Heart left ventricle (tissue), 16 donors: ENCODE measurements at regions of chr12 and their contacts with region 1.

Region 1: DNA sequence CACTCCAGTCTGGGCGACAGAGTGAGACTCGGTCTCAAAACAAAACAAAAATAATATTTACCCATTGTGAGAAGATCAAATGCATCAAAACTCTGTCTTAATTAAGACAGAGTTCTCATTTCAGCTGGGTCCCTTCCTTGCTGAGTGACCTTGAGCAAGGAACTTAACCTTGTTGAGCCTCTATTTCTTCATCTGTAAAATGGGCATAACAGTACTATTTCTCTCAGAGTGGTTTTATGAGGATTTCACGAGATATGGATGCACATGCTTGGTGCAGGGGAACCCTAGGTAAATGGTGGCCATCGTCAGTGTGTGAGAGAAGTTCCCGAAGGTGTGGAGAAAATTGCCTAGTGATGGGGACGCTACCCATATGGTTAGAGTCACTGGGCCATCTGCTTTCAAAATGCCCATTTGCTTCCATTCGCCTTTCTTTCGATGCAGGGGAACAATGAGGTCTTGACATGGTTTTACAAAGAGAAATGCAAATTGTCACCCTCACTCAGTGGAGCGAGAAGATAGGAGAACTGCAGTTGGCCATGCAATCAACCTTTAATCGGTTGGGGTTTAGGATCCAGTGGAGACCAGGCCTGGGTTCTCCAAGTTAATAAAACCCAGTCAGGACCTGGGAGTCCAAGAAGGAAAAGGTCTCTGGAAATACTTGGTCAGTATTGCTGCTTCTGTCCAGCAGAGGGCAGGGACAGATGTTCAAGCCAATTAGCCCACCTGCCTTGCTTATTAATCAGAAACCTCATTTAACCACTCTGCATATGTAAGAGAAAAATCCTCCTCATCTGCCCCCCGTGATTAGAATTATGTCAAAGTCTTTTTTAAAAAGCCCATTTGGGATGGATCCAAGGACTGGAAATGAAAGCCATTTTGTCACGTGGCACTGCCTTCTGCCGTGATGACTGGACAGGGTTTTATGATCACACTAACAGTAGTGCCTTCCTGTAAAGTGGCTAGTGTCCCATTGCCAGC is 37.2 kb downstream of the CFAP251 start:
- DNase-seq: no peak
- ATAC-seq: no peak
- H3K4me3 ChIP-seq: no peak overlapping the region
- H3K27ac ChIP-seq: no peak overlapping the region
- H3K4me1 ChIP-seq: no peaks in the 10 kb centered on the region
- H3K27me3 ChIP-seq: no peaks in the 10 kb centered on the region
- CTCF ChIP-seq: peak in 9 of 12 donors; percentile 24 to 59 (median 49)
- POLR2A ChIP-seq: no peak

Region 2: GRCh38 chr12:121560392-121561008 is 395.0 kb before region 1 on chr12:
- intact Hi-C with region 1: no loop called
- DNase-seq: no peak
- ATAC-seq: no peak
- H3K4me3 ChIP-seq: no peak overlapping the region
- H3K27ac ChIP-seq: no peak overlapping the region
- H3K4me1 ChIP-seq: peaks cover 0 to 14% (median 0%) of the 10 kb centered on the region in 12 donors
- H3K27me3 ChIP-seq: no peaks in the 10 kb centered on the region
- CTCF ChIP-seq: no peak
- POLR2A ChIP-seq: no peak

Region 3: DNA sequence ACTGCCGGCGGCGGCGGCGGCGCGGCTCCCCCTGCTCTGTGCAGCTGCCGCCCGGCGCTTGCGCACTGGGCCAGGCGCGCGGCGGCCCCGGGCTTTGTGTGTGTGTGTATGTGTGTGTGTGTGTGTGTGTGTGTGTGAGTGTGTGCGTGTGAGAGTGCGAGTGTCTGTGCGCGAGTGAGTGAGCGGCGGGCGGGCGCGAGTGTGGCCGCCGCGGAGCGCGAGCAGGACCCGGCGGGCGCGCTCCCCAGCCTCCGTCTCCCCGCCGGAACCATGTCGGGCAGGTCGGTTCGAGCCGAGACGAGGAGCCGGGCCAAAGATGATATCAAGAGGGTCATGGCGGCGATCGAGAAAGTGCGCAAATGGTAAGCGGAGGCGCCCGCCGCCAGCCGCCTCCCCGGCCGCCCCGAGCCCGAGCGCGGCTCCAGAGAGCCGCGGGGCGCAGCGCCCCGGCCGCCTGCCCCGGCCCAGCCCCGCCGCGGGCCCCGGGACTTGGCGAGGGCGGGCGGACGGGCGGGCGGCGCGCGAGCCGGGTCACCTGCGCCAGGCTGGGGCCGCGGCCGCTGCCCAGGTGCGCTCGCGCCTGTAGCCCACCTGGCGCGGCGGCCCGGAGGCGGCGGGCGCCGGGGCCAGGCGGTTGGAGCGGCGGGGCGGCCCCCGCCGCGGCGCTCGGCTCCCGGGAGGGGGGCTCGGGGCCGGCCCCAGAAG is 66.4 kb after region 1 on chr12 and contains the start of gene BCL7A:
- intact Hi-C with region 1: loop called in 3 of 10 experiments (anchors 5 to 10 kb)
- DNase-seq: peak; percentile 66 to 81 (median 73)
- ATAC-seq: peak; percentile 57 to 84 (median 77)
- H3K4me3 ChIP-seq: peak within 1 kb of the TSS; percentile 42 to 88 (median 71)
- H3K27ac ChIP-seq: peak within 1 kb of the TSS; percentile 72 to 94 (median 81)
- H3K4me1 ChIP-seq: peaks cover 3 to 32% (median 16%) of the 10 kb centered on the region in 12 donors
- H3K27me3 ChIP-seq: peaks cover 0 to 11% (median 0%) of the 10 kb centered on the region in 9 donors
- CTCF ChIP-seq: no peak
- POLR2A ChIP-seq: no peak
- total RNA-seq, gene BCL7A: 11.4 to 22.1 (median 14.3) TPM

Region 4: GRCh38 chr12:122031342-122032216 is 76.0 kb after region 1 on chr12:
- intact Hi-C with region 1: loop called in 2 of 10 experiments (anchors 5 to 10 kb)
- DNase-seq: peak in 2 of 5 donors; percentile 39 to 51
- ATAC-seq: peak in 3 of 4 donors; percentile 38 to 56 (median 48)
- H3K4me3 ChIP-seq: no peak overlapping the region
- H3K27ac ChIP-seq: no peak overlapping the region
- H3K4me1 ChIP-seq: peaks cover 0 to 26% (median 6%) of the 10 kb centered on the region in 12 donors
- H3K27me3 ChIP-seq: no peaks in the 10 kb centered on the region
- CTCF ChIP-seq: peak; percentile 47 to 75 (median 66)
- POLR2A ChIP-seq: no peak